ENCODE measurements at regions of chr5 and their contacts with region 1.

Region 1: DNA sequence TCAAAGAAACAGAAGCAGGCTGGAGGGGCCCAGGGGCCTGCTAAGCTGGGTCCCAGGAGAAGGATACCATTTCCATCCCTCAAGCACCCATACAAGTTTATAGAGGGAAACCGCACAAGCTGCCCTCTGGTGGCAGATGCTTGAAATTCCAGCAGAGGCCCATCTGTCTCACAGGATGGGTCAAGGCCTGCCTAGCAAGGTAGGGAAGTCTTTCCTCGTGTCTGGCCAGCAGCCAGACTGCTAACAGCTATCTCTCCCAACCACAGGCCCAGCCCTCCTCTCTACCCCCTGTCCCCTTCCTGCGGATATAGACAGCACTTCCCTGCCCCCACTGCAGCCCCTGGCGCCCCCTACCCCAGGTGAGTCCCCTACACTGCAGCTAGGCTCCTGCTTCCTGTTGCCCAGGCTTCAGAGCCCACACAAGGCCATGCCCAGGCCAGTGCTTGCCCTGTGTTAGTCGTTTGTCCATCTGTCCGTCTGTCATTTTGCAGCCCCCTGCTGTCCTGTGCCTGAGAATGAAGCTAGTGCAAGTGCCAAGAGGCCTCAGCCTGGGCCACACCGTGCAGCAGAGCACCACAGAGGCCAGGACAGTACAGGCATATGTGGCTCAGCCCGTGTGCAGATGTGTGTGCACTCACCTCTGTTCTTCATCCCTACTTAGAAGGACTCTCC is 26.2 kb downstream of the TCF7 start:
- DNase-seq: peak; percentile 59 to 79 (median 78)
- H3K4me3 ChIP-seq: peak overlapping the region in 1 of 7 experiments; percentile 28
- H3K27ac ChIP-seq: no peak overlapping the region
- H3K4me1 ChIP-seq: peaks cover 2 to 45% (median 39%) of the 10 kb centered on the region in 4 experiments
- H3K27me3 ChIP-seq: no peaks in the 10 kb centered on the region

Region 2: GRCh38 chr5:134026521-134027268 is 114.0 kb before region 1 on chr5:
- CTCF ChIA-PET with region 1: interaction called, 10 read pairs
- POLR2A ChIA-PET with region 1: no interaction called
- DNase-seq: peak; percentile 69 to 82 (median 82)
- H3K4me3 ChIP-seq: no peak overlapping the region
- H3K27ac ChIP-seq: no peak overlapping the region
- H3K4me1 ChIP-seq: no peaks in the 10 kb centered on the region
- H3K27me3 ChIP-seq: no peaks in the 10 kb centered on the region

Region 3: DNA sequence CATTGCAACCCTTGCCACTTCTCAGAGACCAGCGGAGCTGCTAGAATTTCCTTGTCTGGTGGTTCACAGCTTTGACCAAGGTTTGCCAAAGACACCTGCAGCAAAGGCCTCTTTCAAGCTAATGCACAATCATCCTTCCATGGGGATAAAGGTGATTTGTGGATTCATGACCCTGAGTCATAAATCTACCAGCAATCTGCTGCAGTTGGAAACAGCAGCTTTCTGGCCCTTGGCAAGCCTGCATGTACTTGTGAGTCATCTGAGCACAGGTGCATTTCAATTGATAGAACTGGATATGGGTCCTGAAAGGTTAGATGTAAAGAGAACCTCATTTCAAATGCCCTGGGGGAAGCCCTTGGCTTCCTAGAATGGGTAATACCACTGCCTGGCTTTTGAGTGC is 47.8 kb before region 1 on chr5:
- CTCF ChIA-PET with region 1: interaction called, 10 read pairs
- POLR2A ChIA-PET with region 1: no interaction called
- DNase-seq: no peak
- H3K4me3 ChIP-seq: no peak overlapping the region
- H3K27ac ChIP-seq: no peak overlapping the region
- H3K4me1 ChIP-seq: no peaks in the 10 kb centered on the region
- H3K27me3 ChIP-seq: peaks cover 0 to 2% (median 0%) of the 10 kb centered on the region in 5 experiments

Region 4: DNA sequence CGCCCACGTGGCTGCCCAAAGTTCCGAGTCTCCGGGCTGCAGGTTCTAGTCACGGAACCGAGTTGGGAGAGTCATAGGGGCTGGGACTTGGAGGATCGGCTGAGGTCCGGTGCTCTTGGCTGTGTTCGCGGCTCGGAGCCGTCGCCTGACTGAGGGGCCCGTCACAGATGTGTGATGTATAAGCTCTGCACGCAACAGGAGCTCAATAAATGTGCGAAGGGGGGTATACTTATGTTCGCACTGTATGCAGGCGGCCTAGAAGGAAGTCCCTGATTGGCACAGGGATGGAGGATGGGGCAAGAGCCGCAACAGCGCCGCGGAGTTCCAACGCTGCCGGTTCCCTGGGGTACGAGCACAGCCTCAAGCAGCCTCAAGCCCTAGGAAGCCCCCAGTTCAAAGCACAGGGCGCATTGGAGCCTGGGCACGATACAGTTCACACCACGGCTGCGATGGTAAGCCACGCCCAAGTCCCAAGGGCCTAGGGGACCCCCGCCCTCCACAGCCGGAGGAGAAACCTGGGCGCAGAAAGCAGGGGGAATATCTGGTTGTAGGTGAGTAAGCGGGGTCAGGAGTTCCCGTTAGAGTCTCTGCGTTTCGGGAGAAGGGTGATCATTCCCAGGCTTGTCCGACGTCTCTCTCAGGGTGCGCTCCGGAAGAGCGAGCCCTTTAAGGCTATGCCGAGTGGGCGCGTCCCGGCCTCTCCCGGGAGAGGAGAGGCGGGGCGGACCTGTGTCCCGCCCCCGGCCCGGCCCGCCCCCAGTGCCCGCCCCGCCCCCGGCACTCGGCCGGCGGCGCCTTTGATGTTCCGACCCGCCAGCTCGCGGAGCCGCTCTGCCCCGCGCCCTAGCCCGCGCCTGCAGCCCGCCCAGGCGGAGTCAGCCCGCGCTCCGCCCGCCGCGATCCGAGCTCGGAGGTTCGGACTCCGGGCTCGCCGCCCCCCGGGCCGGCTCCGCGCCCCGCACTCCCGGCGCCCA is 26.5 kb before region 1 on chr5 and contains the start of gene TCF7:
- CTCF ChIA-PET with region 1: interaction called, 52 read pairs
- POLR2A ChIA-PET with region 1: interaction called, 5 read pairs
- DNase-seq: peak; percentile 54 to 71 (median 66)
- H3K4me3 ChIP-seq: peak within 1 kb of the TSS; percentile 21 to 83 (median 64)
- H3K27ac ChIP-seq: no peak within 1 kb of the TSS
- H3K4me1 ChIP-seq: peaks cover 0 to 26% (median 21%) of the 10 kb centered on the region in 4 experiments
- H3K27me3 ChIP-seq: peaks cover 0 to 67% (median 21%) of the 10 kb centered on the region in 5 experiments

Region 5: GRCh38 chr5:134119720-134120119 is 20.9 kb before region 1 on chr5:
- CTCF ChIA-PET with region 1: interaction called, 59 read pairs
- POLR2A ChIA-PET with region 1: no interaction called
- DNase-seq: no peak
- H3K4me3 ChIP-seq: no peak overlapping the region
- H3K27ac ChIP-seq: no peak overlapping the region
- H3K4me1 ChIP-seq: peaks cover 0 to 20% (median 14%) of the 10 kb centered on the region in 4 experiments
- H3K27me3 ChIP-seq: peaks cover 0 to 30% (median 2%) of the 10 kb centered on the region in 5 experiments

Region 6: GRCh38 chr5:134125039-134126015 is 15.3 kb before region 1 on chr5:
- CTCF ChIA-PET with region 1: interaction called, 59 read pairs
- POLR2A ChIA-PET with region 1: interaction called, 7 read pairs
- DNase-seq: no peak
- H3K4me3 ChIP-seq: no peak overlapping the region
- H3K27ac ChIP-seq: no peak overlapping the region
- H3K4me1 ChIP-seq: peaks cover 0 to 15% (median 9%) of the 10 kb centered on the region in 4 experiments
- H3K27me3 ChIP-seq: no peaks in the 10 kb centered on the region

Region 7: DNA sequence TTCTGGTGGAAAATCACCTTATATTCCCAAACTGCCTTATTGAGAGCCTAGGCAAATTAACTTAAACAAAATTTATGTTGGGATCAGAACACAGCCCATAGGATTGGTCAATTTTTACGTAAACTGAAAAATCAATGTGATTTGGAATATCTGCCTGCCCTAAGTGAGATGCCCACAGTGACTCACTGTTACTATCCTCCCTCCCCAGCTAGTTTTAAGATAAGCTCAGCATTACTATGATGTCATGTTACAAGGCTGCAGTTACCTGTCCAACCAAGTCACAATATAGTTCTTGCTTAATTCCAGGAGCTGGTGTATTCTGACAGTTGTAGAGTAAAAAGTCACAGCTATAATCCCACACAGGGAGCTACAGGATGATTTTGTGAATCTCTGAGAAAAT is 13.0 kb after region 1 on chr5:
- CTCF ChIA-PET with region 1: interaction called, 34 read pairs
- POLR2A ChIA-PET with region 1: interaction called, 5 read pairs
- DNase-seq: no peak
- H3K4me3 ChIP-seq: no peak overlapping the region
- H3K27ac ChIP-seq: no peak overlapping the region
- H3K4me1 ChIP-seq: no peaks in the 10 kb centered on the region
- H3K27me3 ChIP-seq: no peaks in the 10 kb centered on the region

Region 8: GRCh38 chr5:134345996-134346395 is 205.3 kb after region 1 on chr5:
- CTCF ChIA-PET with region 1: no interaction called
- POLR2A ChIA-PET with region 1: no interaction called
- DNase-seq: no peak
- H3K4me3 ChIP-seq: no peak overlapping the region
- H3K27ac ChIP-seq: no peak overlapping the region
- H3K4me1 ChIP-seq: no peaks in the 10 kb centered on the region
- H3K27me3 ChIP-seq: no peaks in the 10 kb centered on the region